Activated CD4-positive, alpha-beta T cell treated with anti-CD3 and anti-CD28 coated beads for 36 hours (primary cell): ENCODE measurements at regions of chr1 and their contacts with region 1.

Region 1: GRCh38 chr1:89804642-89805237 is 16.1 kb upstream of the LRRC8D start:
- DNase-seq: peak; percentile 93
- ATAC-seq: peak; percentile 90
- H3K4me3 Mint-ChIP-seq: no peak overlapping the region
- H3K27ac Mint-ChIP-seq: no peak overlapping the region
- H3K4me1 Mint-ChIP-seq: peaks cover 5% of the 10 kb centered on the region
- H3K27me3 Mint-ChIP-seq: peaks cover 3% of the 10 kb centered on the region

Region 2: DNA sequence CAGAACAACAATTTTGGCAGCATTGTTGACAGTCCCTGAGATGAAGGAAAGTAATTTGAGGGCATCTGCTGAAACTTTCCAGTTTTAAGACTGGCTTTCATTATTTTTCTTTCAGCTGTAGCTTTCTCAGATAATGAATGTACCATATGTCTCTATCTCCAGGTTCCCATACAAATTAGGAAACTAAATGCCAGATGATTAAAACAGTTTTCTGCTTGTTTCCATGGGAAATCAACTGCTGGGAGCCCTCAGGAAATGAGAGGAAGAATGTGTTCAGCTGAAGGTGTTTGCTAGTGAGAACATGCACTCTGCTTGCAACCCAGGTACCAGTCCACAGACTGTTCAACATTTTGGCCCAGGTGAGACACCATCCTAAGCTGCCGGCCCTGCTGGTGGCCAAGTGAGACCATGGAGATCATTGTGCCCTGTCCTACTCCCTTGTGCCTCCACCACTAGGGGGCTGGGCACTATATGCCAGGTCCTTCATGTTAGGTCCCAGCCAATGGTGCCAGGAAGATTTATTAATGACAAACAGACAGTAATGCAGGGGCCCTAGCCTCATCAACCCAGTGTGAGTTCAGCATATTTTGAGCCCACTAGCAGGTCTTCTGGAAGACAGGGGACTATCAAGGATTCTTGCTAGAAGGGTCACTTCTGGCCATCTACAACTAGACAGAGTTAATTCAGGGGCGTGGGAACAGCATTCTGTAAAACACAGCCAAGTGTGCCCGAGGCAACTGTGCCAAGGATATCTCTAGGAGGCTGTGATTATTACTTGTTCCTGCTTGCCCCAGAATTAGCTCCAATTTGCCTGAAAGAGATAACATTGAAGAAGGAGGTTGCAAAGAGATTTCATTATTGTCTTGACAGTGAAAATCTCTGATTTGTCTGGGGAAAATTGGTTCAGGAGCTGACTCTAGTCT is 188.8 kb before region 1 on chr1:
- CTCF ChIA-PET with region 1: no interaction called
- POLR2A ChIA-PET with region 1: no interaction called
- intact Hi-C with region 1: no loop called
- DNase-seq: peak; percentile 46
- ATAC-seq: no peak
- H3K4me3 Mint-ChIP-seq: no peak overlapping the region
- H3K27ac Mint-ChIP-seq: no peak overlapping the region
- H3K4me1 Mint-ChIP-seq: peaks cover 86% of the 10 kb centered on the region
- H3K27me3 Mint-ChIP-seq: no peaks in the 10 kb centered on the region

Region 3: DNA sequence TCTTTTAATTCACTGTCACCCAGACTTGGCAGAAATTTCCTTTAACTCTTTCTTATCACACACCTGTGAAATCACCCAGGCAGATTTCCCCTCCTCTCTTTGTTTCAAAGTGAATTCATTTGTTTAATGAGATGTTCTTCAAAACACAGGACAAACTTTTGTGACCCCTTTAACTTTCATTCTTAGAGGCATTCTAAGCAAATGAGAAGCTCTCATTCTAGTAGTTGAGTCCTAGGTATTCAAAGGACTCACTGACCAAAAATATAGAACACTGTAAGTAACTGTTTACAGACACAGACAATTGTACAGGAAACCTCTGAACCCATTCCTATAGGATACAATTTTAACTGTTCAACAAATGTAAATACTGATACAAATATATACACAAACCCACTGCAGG is 155.0 kb before region 1 on chr1:
- CTCF ChIA-PET with region 1: no interaction called
- POLR2A ChIA-PET with region 1: no interaction called
- intact Hi-C with region 1: no loop called
- DNase-seq: no peak
- ATAC-seq: peak; percentile 36
- H3K4me3 Mint-ChIP-seq: no peak overlapping the region
- H3K27ac Mint-ChIP-seq: peak overlapping the region; percentile 52
- H3K4me1 Mint-ChIP-seq: peaks cover 75% of the 10 kb centered on the region
- H3K27me3 Mint-ChIP-seq: no peaks in the 10 kb centered on the region

Region 4: DNA sequence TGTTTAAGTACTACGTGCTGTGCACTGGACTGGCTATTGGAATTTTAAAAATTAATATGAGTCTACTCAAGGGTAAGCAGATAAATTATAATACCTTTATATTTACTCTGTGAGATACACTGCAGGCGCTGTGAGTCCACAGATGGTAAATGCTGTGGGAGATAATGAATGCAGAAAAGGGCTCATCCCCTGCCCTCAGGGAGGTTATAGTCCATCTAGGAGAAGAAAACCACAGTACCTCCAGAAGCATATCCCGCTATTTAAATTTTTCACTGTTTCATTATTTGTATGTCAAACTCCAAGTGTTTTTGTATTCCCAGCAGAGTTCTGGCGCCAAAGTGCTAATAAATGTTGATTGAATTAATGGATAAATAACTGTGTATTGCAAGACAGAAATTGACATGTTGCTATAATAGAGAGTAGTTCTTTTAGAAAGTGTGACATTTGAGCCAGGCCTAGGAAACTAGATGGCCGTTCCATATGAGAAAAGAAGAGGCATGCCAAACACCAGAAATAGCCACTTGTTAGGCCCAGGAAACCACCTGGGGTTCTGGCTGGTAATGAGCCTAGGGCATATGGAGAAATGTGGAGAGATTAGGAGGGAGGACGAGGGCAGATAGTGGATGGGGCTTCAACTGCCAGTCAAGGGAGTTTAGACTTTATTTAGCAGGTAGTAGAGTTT is 77.7 kb after region 1 on chr1:
- CTCF ChIA-PET with region 1: no interaction called
- POLR2A ChIA-PET with region 1: no interaction called
- intact Hi-C with region 1: no loop called
- DNase-seq: no peak
- ATAC-seq: no peak
- H3K4me3 Mint-ChIP-seq: no peak overlapping the region
- H3K27ac Mint-ChIP-seq: no peak overlapping the region
- H3K4me1 Mint-ChIP-seq: peaks cover 45% of the 10 kb centered on the region
- H3K27me3 Mint-ChIP-seq: no peaks in the 10 kb centered on the region

Region 5: DNA sequence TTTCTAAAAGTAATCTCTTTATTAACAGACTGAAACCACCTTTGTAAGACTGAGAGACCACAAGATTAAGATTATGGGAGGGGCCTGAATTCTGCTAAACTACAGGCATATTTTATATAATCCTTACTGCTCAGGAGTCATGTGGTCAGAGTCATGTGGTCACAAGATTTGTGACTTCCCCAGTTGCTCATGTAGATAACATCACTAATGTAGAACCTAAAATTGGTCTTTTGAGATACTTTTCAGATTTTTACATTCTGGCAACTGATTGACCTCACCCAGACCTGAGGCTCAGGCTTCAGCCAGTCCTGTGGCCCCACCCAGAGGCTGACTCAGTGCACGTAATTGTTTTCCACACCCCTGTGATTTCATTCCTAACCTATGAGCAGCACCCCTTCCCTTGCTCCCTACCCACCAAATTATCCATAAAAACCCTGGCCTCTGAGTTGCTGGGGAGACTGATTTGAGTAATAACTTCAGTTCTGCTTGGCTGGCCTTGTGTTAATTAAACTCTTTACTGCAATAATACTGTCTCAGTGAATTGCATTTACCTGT is 148.4 kb after region 1 on chr1:
- CTCF ChIA-PET with region 1: interaction called, 4 read pairs
- POLR2A ChIA-PET with region 1: no interaction called
- intact Hi-C with region 1: loop called in 1 of 2 experiments (anchors 1 kb)
- DNase-seq: peak; percentile 65
- ATAC-seq: peak; percentile 76
- H3K4me3 Mint-ChIP-seq: no peak overlapping the region
- H3K27ac Mint-ChIP-seq: no peak overlapping the region
- H3K4me1 Mint-ChIP-seq: peaks cover 25% of the 10 kb centered on the region
- H3K27me3 Mint-ChIP-seq: no peaks in the 10 kb centered on the region

Region 6: GRCh38 chr1:89987170-89987819 is 182.6 kb after region 1 on chr1:
- CTCF ChIA-PET with region 1: interaction called, 21 read pairs
- POLR2A ChIA-PET with region 1: interaction called, 3 read pairs
- intact Hi-C with region 1: loop called (anchors 1 kb)
- DNase-seq: peak; percentile 54
- ATAC-seq: peak; percentile 90
- H3K4me3 Mint-ChIP-seq: no peak overlapping the region
- H3K27ac Mint-ChIP-seq: no peak overlapping the region
- H3K4me1 Mint-ChIP-seq: peaks cover 11% of the 10 kb centered on the region
- H3K27me3 Mint-ChIP-seq: peaks cover 2% of the 10 kb centered on the region